Naive thymus-derived CD4-positive, alpha-beta T cell (primary cell): ENCODE measurements at regions of chr3 and their contacts with region 1.

Region 1: DNA sequence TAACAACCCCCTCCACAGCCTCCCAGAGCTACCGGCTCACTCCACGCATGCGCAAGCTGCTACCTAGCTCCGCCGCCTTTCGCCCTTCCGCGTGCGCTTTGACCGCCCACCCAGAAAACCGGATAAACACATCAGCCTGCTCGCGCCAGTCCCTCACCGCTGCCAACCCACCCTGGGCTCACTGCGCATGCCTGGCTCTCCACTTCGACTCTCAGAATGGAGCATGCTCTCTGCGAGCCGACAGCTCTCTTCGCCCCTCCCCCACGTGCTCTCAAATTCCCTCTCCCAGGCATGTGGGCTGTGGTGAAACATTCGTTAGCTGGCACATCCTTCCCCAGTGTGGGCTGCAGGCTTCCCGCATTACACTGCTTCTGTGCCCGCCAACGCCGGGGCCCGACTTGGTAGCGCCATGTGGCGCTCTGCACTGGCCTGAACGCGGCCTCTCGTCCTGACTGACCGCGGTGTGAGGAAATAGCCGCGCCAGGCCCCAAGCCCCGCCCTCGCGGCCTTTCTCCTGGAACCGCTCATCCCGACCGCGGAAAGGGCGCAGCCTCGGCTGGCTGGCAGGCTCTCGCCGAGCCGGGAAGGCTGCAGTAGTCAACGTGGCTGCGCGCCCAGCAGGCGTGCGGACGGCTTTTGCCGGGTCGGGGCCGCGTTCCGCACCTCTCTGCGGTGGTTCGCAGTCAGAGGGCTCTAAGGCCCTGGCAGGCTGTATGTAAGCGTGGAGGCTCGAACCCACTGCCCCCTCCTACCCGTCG is 445 bp upstream of the MSL2 start:
- DNase-seq: peak; percentile 94 to 99 (median 98)
- ATAC-seq: peak; percentile 73
- H3K4me3 ChIP-seq: peak overlapping the region; percentile 77
- H3K4me3 Mint-ChIP-seq: peak overlapping the region; percentile 91 to 99 (median 98)
- H3K27ac ChIP-seq: peak overlapping the region; percentile 94
- H3K27ac Mint-ChIP-seq: peak overlapping the region; percentile 96 to 100 (median 99)
- H3K4me1 ChIP-seq: peaks cover 6 to 11% of the 10 kb centered on the region in 2 donors
- H3K4me1 Mint-ChIP-seq: peaks cover 20 to 38% (median 35%) of the 10 kb centered on the region in 7 donors
- H3K27me3 ChIP-seq: no peaks in the 10 kb centered on the region
- H3K27me3 Mint-ChIP-seq: peaks cover 0 to 7% (median 0%) of the 10 kb centered on the region in 5 donors

Region 2: DNA sequence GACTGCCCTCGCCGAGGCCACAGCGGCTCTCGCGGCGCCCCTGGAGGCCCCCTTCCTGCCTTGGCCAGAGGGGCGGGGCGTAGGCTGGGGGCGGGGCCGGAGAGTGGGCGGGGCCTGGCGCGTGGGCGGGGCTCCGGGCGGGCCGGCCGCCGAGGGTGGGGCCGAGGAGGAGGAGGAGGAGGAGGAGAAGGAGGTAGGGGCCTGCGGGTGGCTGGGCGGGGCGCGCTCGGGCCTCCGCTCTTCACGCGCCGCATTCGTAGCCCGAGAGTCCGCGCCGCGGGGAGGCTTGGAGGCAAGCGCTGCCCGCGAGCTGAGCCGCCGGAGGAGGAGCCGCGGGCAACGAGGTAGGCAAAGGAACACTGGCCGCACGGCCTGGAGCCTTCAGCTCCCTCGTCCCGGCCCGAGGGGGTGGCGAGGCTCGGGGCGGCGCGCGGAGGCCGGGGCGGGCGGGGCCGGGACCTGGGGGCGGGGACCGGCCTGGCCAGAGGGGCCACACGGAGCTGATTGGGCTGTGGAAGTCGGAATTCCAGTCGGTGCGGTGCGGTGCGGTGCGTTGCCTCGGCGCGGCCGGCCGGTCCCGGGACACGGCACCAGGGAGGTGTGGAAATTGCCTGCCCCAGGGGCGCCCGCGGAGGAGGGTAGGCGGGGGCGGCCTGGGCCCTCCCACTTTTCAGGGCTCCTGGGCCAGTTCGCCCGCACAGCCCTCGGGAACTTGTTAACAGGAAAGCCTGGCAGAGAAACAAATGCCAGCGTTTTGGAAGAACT is 230.9 kb before region 1 on chr3 and contains the start of gene PPP2R3A:
- CTCF ChIA-PET with region 1: no interaction called
- POLR2A ChIA-PET with region 1: no interaction called
- intact Hi-C with region 1: loop called (anchors 2 to 5 kb)
- DNase-seq: peak; percentile 41 to 71 (median 59)
- ATAC-seq: peak; percentile 97
- H3K4me3 ChIP-seq: peak within 1 kb of the TSS; percentile 37
- H3K4me3 Mint-ChIP-seq: peak within 1 kb of the TSS; percentile 74 to 85 (median 81)
- H3K27ac ChIP-seq: no peak within 1 kb of the TSS
- H3K27ac Mint-ChIP-seq: peak within 1 kb of the TSS in 6 of 9 donors; percentile 8 to 66 (median 40)
- H3K4me1 ChIP-seq: peaks cover 5 to 7% of the 10 kb centered on the region in 2 donors
- H3K4me1 Mint-ChIP-seq: peaks cover 9 to 19% (median 12%) of the 10 kb centered on the region in 7 donors
- H3K27me3 ChIP-seq: no peaks in the 10 kb centered on the region
- H3K27me3 Mint-ChIP-seq: peaks cover 30 to 49% (median 41%) of the 10 kb centered on the region in 5 donors
- total RNA-seq, gene PPP2R3A: 0.13 to 0.89 (median 0.59) TPM in 4 of 5 experiments, not detected in the other

Region 3: GRCh38 chr3:136142592-136142991 is 54.0 kb before region 1 on chr3:
- CTCF ChIA-PET with region 1: interaction called, 4 read pairs
- POLR2A ChIA-PET with region 1: interaction called, 3 read pairs
- intact Hi-C with region 1: loop called (anchors 5 to 10 kb)
- DNase-seq: no peak
- ATAC-seq: peak; percentile 43
- H3K4me3 ChIP-seq: no peak overlapping the region
- H3K4me3 Mint-ChIP-seq: no peak overlapping the region
- H3K27ac ChIP-seq: no peak overlapping the region
- H3K27ac Mint-ChIP-seq: peak overlapping the region in 4 of 9 donors; percentile 28 to 67 (median 53)
- H3K4me1 ChIP-seq: no peaks in the 10 kb centered on the region
- H3K4me1 Mint-ChIP-seq: peaks cover 2 to 31% (median 12%) of the 10 kb centered on the region in 7 donors
- H3K27me3 ChIP-seq: no peaks in the 10 kb centered on the region
- H3K27me3 Mint-ChIP-seq: no peaks in the 10 kb centered on the region

Region 4: DNA sequence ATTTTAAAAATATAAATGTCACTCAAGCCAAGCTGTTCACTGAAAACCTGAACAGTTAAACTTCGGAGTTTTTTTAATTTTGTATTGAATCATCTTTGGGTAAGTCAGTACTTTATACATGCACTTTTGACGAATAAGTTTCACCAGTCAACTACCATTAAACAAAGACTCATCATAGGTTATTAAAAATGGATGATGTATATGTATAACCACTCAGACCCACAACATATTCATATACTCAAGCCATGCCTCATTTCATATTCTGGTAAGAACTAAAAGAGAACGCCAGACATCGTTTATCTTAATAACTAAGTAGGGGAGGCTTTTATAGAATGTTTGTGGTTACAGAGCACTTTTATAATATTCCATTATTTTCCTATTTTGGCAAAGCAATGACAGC is 18.7 kb before region 1 on chr3:
- CTCF ChIA-PET with region 1: interaction called, 6 read pairs
- POLR2A ChIA-PET with region 1: interaction called, 8 read pairs
- intact Hi-C with region 1: loop called in 1 of 2 experiments (anchors 1 kb)
- DNase-seq: no peak
- ATAC-seq: no peak
- H3K4me3 ChIP-seq: no peak overlapping the region
- H3K4me3 Mint-ChIP-seq: peak overlapping the region in 5 of 10 donors; percentile 13 to 76 (median 53)
- H3K27ac ChIP-seq: no peak overlapping the region
- H3K27ac Mint-ChIP-seq: peak overlapping the region in 2 of 9 donors; percentile 14 to 24
- H3K4me1 ChIP-seq: peaks cover 47 to 68% of the 10 kb centered on the region in 2 donors
- H3K4me1 Mint-ChIP-seq: peaks cover 36 to 58% (median 48%) of the 10 kb centered on the region in 7 donors
- H3K27me3 ChIP-seq: no peaks in the 10 kb centered on the region
- H3K27me3 Mint-ChIP-seq: no peaks in the 10 kb centered on the region

Region 5: DNA sequence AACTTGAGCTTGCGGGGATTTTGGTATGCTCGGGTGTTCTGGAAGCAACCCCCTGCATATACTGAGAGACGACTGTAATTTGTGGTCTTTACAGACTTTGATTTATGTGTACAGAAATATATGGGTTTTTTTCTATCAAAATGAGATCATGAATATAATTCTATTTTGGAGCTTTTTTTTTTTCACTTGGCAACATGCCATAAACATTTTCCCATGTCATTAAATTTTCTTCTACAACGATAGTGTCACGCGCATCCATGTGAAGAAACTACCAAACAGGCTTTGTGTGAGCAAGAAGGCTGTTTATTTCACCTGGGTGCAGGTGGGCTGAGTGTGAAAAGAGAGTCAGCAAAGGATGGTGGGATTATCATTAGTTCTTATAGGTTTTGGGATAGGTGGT is 20.6 kb after region 1 on chr3:
- CTCF ChIA-PET with region 1: no interaction called
- POLR2A ChIA-PET with region 1: interaction called, 4 read pairs
- intact Hi-C with region 1: loop called in 1 of 2 experiments (anchors 2 kb)
- DNase-seq: no peak
- ATAC-seq: no peak
- H3K4me3 ChIP-seq: no peak overlapping the region
- H3K4me3 Mint-ChIP-seq: no peak overlapping the region
- H3K27ac ChIP-seq: no peak overlapping the region
- H3K27ac Mint-ChIP-seq: no peak overlapping the region
- H3K4me1 ChIP-seq: no peaks in the 10 kb centered on the region
- H3K4me1 Mint-ChIP-seq: no peaks in the 10 kb centered on the region
- H3K27me3 ChIP-seq: no peaks in the 10 kb centered on the region
- H3K27me3 Mint-ChIP-seq: peaks cover 0 to 7% (median 6%) of the 10 kb centered on the region in 5 donors

Region 6: GRCh38 chr3:136919799-136920580 is 723.4 kb after region 1 on chr3:
- CTCF ChIA-PET with region 1: no interaction called
- POLR2A ChIA-PET with region 1: no interaction called
- intact Hi-C with region 1: loop called in 1 of 2 experiments (anchors 5 kb)
- DNase-seq: peak in 7 of 9 donors; percentile 8 to 51 (median 40)
- ATAC-seq: peak; percentile 94
- H3K4me3 ChIP-seq: no peak overlapping the region
- H3K4me3 Mint-ChIP-seq: peak overlapping the region in 8 of 10 donors; percentile 47 to 69 (median 60)
- H3K27ac ChIP-seq: peak overlapping the region; percentile 38
- H3K27ac Mint-ChIP-seq: peak overlapping the region in 6 of 9 donors; percentile 6 to 83 (median 70)
- H3K4me1 ChIP-seq: peaks cover 21 to 78% of the 10 kb centered on the region in 2 donors
- H3K4me1 Mint-ChIP-seq: peaks cover 60 to 94% (median 90%) of the 10 kb centered on the region in 7 donors
- H3K27me3 ChIP-seq: no peaks in the 10 kb centered on the region
- H3K27me3 Mint-ChIP-seq: no peaks in the 10 kb centered on the region

Region 7: DNA sequence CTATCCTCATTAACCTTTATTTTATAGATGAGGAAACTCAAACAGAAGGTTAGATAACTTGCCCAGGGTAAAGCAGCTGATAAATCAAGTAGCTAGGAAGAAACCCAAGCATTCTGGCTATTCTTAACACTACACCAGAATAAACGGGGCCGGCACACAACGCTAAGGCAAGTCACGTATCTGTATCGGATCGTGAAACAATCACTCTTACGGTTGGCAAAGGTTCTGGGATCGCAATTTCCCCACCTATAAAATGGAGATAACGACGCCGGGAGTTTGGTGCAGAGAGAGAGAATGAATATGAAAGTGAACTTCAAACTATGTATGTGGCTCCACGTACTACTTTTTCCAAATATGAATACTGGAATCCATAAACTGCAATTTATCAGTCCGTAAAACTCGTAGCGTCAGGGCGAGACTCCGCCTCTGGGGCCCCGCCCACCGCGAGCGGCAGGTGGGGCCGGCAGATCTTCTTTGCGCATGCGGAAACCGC is 1990.3 kb after region 1 on chr3:
- CTCF ChIA-PET with region 1: no interaction called
- POLR2A ChIA-PET with region 1: no interaction called
- intact Hi-C with region 1: loop called in 1 of 2 experiments (anchors 10 kb)
- DNase-seq: peak; percentile 83 to 91 (median 87)
- ATAC-seq: peak; percentile 96
- H3K4me3 ChIP-seq: peak overlapping the region; percentile 98
- H3K4me3 Mint-ChIP-seq: peak overlapping the region; percentile 89 to 99 (median 97)
- H3K27ac ChIP-seq: peak overlapping the region; percentile 86
- H3K27ac Mint-ChIP-seq: peak overlapping the region; percentile 92 to 96 (median 93)
- H3K4me1 ChIP-seq: peaks cover 13 to 24% of the 10 kb centered on the region in 2 donors
- H3K4me1 Mint-ChIP-seq: peaks cover 32 to 54% (median 45%) of the 10 kb centered on the region in 7 donors
- H3K27me3 ChIP-seq: no peaks in the 10 kb centered on the region
- H3K27me3 Mint-ChIP-seq: peaks cover 0 to 19% (median 9%) of the 10 kb centered on the region in 5 donors